HepG2 (cell line): ENCODE measurements at regions of chr4 and their contacts with region 1.

Region 1: DNA sequence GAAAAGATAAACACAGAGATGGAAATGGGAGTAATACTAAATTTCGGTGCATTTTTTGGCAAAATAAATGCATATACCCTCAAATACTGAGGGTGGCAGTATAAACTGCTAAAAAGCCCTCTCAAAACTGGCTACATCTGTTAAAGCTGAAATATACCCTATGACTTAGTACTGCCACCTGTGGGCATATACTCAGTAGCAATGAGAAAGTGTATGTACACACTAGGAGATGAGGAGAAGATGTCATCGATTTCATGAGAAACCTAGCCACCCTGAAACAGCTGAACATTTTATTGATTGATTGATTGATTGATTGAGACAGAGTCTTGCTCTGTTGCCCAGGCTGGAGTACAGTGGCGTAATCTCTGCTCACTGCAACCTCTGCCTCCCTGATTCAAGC is 12.2 kb upstream of the TMEM128 start:
- DNase-seq: peak; percentile 79
- ATAC-seq: peak; percentile 82
- H3K4me3 ChIP-seq: peak overlapping the region; percentile 38 to 60 (median 56); a peak in 4 of 6 replicates
- H3K27ac ChIP-seq: peak overlapping the region; percentile 94
- H3K4me1 ChIP-seq: peaks cover 46% of the 10 kb centered on the region
- H3K27me3 ChIP-seq: no peaks in the 10 kb centered on the region
- CTCF ChIP-seq: peak; percentile 70
- EP300 ChIP-seq: no peak
- POLR2A ChIP-seq: no peak
- RAD21 ChIP-seq: peak; percentile 61

Region 2: GRCh38 chr4:4248029-4248884 is 12.0 kb before region 1 on chr4 and contains the start of gene TMEM128:
- CTCF ChIA-PET with region 1: interaction called, 3 read pairs
- POLR2A ChIA-PET with region 1: interaction called, 63 read pairs
- in situ Hi-C with region 1: no loop called
- intact Hi-C with region 1: no loop called
- DNase-seq: peak; percentile 90
- ATAC-seq: peak; percentile 96
- H3K4me3 ChIP-seq: peak within 1 kb of the TSS; percentile 78 to 93 (median 86)
- H3K27ac ChIP-seq: peak within 1 kb of the TSS; percentile 92
- H3K4me1 ChIP-seq: peaks cover 33% of the 10 kb centered on the region
- H3K27me3 ChIP-seq: no peaks in the 10 kb centered on the region; a peak in 1 of 5 replicates
- CTCF ChIP-seq: peak; percentile 36
- EP300 ChIP-seq: no peak
- POLR2A ChIP-seq: peak; percentile 89 to 92
- RAD21 ChIP-seq: no peak
- total RNA-seq, gene TMEM128: 17.2 and 19.4 TPM in 2 replicates

Region 3: DNA sequence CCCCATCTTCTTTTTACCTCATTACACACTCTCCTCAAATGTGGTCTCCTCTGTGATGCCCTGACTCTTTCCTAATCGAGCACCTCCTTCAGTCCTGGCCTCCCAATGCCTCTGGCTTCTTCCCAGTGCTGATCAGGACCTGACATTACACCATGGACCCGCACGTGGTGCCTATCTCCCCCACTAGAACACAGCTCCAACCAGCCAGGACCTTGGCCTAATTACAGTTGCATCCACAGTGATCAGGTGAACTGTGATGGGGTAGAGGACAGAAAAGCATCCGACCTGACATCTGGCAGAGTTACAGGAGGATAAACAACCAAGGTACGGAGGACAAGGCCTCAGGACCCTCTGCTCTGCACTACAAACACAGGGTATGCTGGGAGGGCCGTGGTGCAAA is 17.3 kb after region 1 on chr4:
- CTCF ChIA-PET with region 1: no interaction called
- POLR2A ChIA-PET with region 1: no interaction called
- in situ Hi-C with region 1: no loop called
- intact Hi-C with region 1: no loop called
- DNase-seq: no peak
- ATAC-seq: no peak
- H3K4me3 ChIP-seq: no peak overlapping the region
- H3K27ac ChIP-seq: no peak overlapping the region
- H3K4me1 ChIP-seq: no peaks in the 10 kb centered on the region
- H3K27me3 ChIP-seq: no peaks in the 10 kb centered on the region
- CTCF ChIP-seq: no peak
- EP300 ChIP-seq: no peak
- POLR2A ChIP-seq: no peak
- RAD21 ChIP-seq: no peak

Region 4: DNA sequence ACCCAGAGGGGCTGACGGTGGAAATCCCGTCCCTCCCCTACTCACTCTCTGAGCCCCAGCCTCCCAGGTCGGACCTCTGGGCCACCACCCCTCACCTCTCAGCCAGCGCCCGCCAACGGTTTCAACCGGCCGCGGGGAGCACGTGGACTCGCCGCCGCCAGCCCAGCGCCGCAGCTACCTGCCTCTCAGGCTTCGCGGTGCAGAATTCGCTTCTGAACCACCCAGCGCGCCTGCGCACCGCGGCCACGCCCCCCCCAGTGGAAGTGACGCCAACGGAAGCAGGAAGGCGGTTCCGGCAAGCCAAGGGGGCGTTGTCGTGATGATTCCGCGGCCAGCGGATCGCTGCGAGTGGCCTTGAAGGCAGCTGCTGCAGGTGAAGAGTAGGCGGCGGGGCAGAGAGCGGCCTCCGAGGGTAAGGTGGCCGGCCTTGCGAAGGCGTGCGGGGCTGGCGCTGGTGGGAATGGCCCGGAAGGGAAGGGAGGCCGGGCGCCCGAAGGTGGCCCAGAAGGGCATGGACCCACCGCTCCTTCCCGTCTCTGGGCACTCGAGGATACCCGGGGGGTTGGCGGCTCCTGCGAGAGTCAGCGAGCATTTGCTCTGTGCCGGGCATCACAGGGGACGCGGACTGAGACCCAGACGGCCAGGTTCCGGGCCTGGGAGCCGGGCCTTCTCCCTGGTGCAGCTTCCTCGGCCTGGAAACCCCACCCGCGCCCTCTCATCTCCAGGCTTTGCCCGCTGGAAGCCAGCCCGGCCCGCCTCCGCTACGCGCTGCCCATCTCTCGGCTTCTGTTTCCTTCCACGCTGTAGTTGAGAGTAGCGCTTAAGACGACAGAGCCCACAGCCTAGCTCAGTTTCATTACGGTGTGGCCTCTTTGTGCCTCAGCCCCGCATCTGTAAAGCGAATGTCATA is 29.9 kb after region 1 on chr4 and contains the starts of genes LYAR and ZBTB49:
- CTCF ChIA-PET with region 1: no interaction called
- POLR2A ChIA-PET with region 1: interaction called, 8 read pairs
- in situ Hi-C with region 1: loop called (anchors 5 kb)
- intact Hi-C with region 1: no loop called
- DNase-seq: peak; percentile 86
- ATAC-seq: peak; percentile 89
- H3K4me3 ChIP-seq: peak within 1 kb of the TSS; percentile 82 to 97 (median 88)
- H3K27ac ChIP-seq: peak within 1 kb of the TSS; percentile 72
- H3K4me1 ChIP-seq: peaks cover 51% of the 10 kb centered on the region
- H3K27me3 ChIP-seq: no peaks in the 10 kb centered on the region; a peak in 1 of 5 replicates
- CTCF ChIP-seq: peak; percentile 48
- EP300 ChIP-seq: no peak
- POLR2A ChIP-seq: peak; percentile 74 to 94; a peak in 3 of 4 replicates
- RAD21 ChIP-seq: 0 out of 2 replicates have a peak, but pooled peaks have one; percentile 44
- total RNA-seq, gene LYAR: 94.2 and 132 TPM in 2 replicates
- total RNA-seq, gene ZBTB49: 3.3 and 4.6 TPM in 2 replicates

Region 5: GRCh38 chr4:4334798-4335520 is 74.7 kb after region 1 on chr4:
- CTCF ChIA-PET with region 1: interaction called, 5 read pairs
- POLR2A ChIA-PET with region 1: interaction called, 8 read pairs
- in situ Hi-C with region 1: loop called (anchors 5 kb)
- intact Hi-C with region 1: loop called (anchors 1 kb)
- DNase-seq: peak; percentile 60
- ATAC-seq: peak; percentile 89
- H3K4me3 ChIP-seq: peak overlapping the region; percentile 55 to 67 (median 56)
- H3K27ac ChIP-seq: no peak overlapping the region
- H3K4me1 ChIP-seq: peaks cover 45% of the 10 kb centered on the region
- H3K27me3 ChIP-seq: no peaks in the 10 kb centered on the region; a peak in 1 of 5 replicates
- CTCF ChIP-seq: peak; percentile 96
- EP300 ChIP-seq: no peak
- POLR2A ChIP-seq: no peak
- RAD21 ChIP-seq: peak; percentile 91

Region 6: GRCh38 chr4:4430492-4431197 is 170.4 kb after region 1 on chr4:
- CTCF ChIA-PET with region 1: interaction called, 5 read pairs
- POLR2A ChIA-PET with region 1: no interaction called
- in situ Hi-C with region 1: no loop called
- intact Hi-C with region 1: loop called (anchors 2 kb)
- DNase-seq: peak; percentile 59
- ATAC-seq: peak; percentile 96
- H3K4me3 ChIP-seq: no peak overlapping the region
- H3K27ac ChIP-seq: no peak overlapping the region
- H3K4me1 ChIP-seq: no peaks in the 10 kb centered on the region
- H3K27me3 ChIP-seq: no peaks in the 10 kb centered on the region
- CTCF ChIP-seq: peak; percentile 78
- EP300 ChIP-seq: no peak
- POLR2A ChIP-seq: no peak
- RAD21 ChIP-seq: 0 out of 2 replicates have a peak, but pooled peaks have one; percentile 28